Panc1 (cell line): ENCODE measurements at regions of chr22 and their contacts with region 1.

Region 1: DNA sequence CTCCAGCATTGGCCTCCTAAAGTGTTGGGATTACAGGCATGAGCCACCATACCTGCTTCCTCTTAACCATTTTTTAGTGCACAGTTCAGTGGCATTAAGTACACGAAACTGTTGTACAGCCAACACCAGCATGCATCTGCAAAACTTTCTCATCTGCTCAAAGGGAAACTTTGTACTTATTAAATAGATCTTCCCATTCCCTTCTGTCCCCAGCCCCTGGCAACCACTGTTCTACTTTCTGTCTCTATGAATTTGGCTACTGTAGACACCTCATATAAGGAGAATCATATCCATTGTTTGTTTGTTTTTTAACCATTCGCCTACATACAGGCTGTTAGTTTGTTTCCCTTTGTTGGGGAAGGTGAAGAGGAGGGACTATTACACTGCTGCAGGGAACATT is 6.5 kb upstream of the EP300 start:
- DNase-seq: no peak
- ATAC-seq: no peak
- H3K4me3 ChIP-seq: no peak overlapping the region
- H3K27ac ChIP-seq: no peak overlapping the region
- H3K4me1 ChIP-seq: 0 out of 2 replicates have a peak, but pooled peaks cover 4% of the 10 kb centered on the region
- H3K27me3 ChIP-seq: no peaks in the 10 kb centered on the region
- CTCF ChIP-seq: no peak

Region 2: GRCh38 chr22:41052661-41053490 is 33.0 kb before region 1 on chr22:
- CTCF ChIA-PET with region 1: no interaction called
- POLR2A ChIA-PET with region 1: interaction called, 13 read pairs
- in situ Hi-C with region 1: no loop called
- intact Hi-C with region 1: no loop called
- DNase-seq: no peak
- ATAC-seq: peak; percentile 63; the same call in 1 of the 2 replicates
- H3K4me3 ChIP-seq: no peak overlapping the region
- H3K27ac ChIP-seq: no peak overlapping the region
- H3K4me1 ChIP-seq: peaks cover 8% of the 10 kb centered on the region
- H3K27me3 ChIP-seq: no peaks in the 10 kb centered on the region
- CTCF ChIP-seq: no peak

Region 3: GRCh38 chr22:41070665-41071331 is 15.0 kb before region 1 on chr22:
- CTCF ChIA-PET with region 1: interaction called, 11 read pairs
- POLR2A ChIA-PET with region 1: no interaction called
- in situ Hi-C with region 1: no loop called
- intact Hi-C with region 1: no loop called
- DNase-seq: no peak
- ATAC-seq: no peak
- H3K4me3 ChIP-seq: no peak overlapping the region
- H3K27ac ChIP-seq: no peak overlapping the region
- H3K4me1 ChIP-seq: no peaks in the 10 kb centered on the region
- H3K27me3 ChIP-seq: no peaks in the 10 kb centered on the region
- CTCF ChIP-seq: no peak